Breast epithelium (tissue), 4 donors: ENCODE measurements at regions of chr20 and their contacts with region 1.

Region 1: GRCh38 chr20:8722276-8722928 is 346.5 kb upstream of the PLCB4 start:
- DNase-seq: peak in 1 of 2 donors; percentile 27
- H3K4me3 ChIP-seq: no peak overlapping the region
- H3K27ac ChIP-seq: no peak overlapping the region
- H3K4me1 ChIP-seq: no peaks in the 10 kb centered on the region
- H3K27me3 ChIP-seq: no peaks in the 10 kb centered on the region
- CTCF ChIP-seq: peak; percentile 52 to 83 (median 82)
- POLR2A ChIP-seq: no peak

Region 2: GRCh38 chr20:8043687-8044282 is 678.6 kb before region 1 on chr20:
- intact Hi-C with region 1: loop called (anchors 5 kb)
- DNase-seq: no peak
- H3K4me3 ChIP-seq: no peak overlapping the region
- H3K27ac ChIP-seq: no peak overlapping the region
- H3K4me1 ChIP-seq: no peaks in the 10 kb centered on the region
- H3K27me3 ChIP-seq: no peaks in the 10 kb centered on the region
- CTCF ChIP-seq: peak; percentile 55 to 70 (median 66)
- POLR2A ChIP-seq: no peak